CD14-positive monocyte (primary cell): ENCODE measurements at regions of chr4 and their contacts with region 1.

Region 1: DNA sequence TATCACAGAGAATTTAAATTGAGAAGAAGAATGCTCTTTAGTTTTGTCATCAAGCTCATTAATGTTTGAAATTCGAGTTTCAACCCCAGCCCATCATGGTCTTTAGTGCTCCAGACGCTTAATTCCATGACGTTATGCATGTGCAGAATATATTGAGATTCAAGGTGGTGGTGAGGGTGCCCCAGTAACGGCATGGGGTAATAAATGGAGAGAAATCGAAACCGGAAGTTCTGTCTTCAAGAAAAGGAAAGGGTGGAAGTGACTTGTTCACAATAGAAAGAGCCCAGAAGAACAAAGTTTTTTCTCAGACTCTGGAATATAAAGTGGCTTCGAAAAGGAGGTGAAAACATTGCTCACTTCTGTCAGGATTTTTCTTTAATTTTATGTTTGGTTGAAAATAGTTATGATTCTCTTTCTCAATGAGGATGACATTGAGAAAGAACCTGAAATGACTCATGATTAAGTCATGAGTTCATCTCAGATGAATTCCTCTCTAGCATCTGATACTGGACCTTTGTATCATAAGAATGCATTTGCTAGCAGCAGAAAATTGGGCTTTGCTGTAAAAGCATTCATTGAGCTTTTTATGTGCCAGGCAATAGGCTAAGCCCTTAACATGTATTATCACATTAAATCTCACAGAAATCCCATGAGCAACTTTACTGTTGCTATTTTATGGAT is 779 bp upstream of the DDX60L start:
- DNase-seq: peak; percentile 78 to 93 (median 89)
- H3K4me3 ChIP-seq: peak overlapping the region; percentile 81 to 93 (median 91)
- H3K4me3 Mint-ChIP-seq: peak overlapping the region; percentile 98 to 99
- H3K27ac ChIP-seq: peak overlapping the region; percentile 97 to 98
- H3K27ac Mint-ChIP-seq: peak overlapping the region; percentile 97 to 100 (median 100)
- H3K4me1 ChIP-seq: peaks cover 51 to 67% of the 10 kb centered on the region in 2 donors
- H3K4me1 Mint-ChIP-seq: peaks cover 67% of the 10 kb centered on the region
- H3K27me3 ChIP-seq: no peaks in the 10 kb centered on the region
- H3K27me3 Mint-ChIP-seq: no peaks in the 10 kb centered on the region
- CTCF ChIP-seq: no peak

Region 2: GRCh38 chr4:168451744-168452390 is 29.2 kb before region 1 on chr4:
- intact Hi-C with region 1: loop called (anchors 2 kb)
- DNase-seq: peak; percentile 82 to 93 (median 91)
- H3K4me3 ChIP-seq: no peak overlapping the region
- H3K4me3 Mint-ChIP-seq: peak overlapping the region; percentile 9 to 64
- H3K27ac ChIP-seq: peak overlapping the region; percentile 39 to 82
- H3K27ac Mint-ChIP-seq: peak overlapping the region; percentile 89 to 98 (median 96)
- H3K4me1 ChIP-seq: peaks cover 26 to 27% of the 10 kb centered on the region in 2 donors
- H3K4me1 Mint-ChIP-seq: peaks cover 31% of the 10 kb centered on the region
- H3K27me3 ChIP-seq: no peaks in the 10 kb centered on the region
- H3K27me3 Mint-ChIP-seq: no peaks in the 10 kb centered on the region
- CTCF ChIP-seq: no peak

Region 3: GRCh38 chr4:168503652-168504362 is 22.7 kb after region 1 on chr4:
- intact Hi-C with region 1: loop called (anchors 2 kb)
- DNase-seq: peak; percentile 91 to 97 (median 97)
- H3K4me3 ChIP-seq: peak overlapping the region in 1 of 3 experiments; percentile 45
- H3K4me3 Mint-ChIP-seq: peak overlapping the region; percentile 21 to 74
- H3K27ac ChIP-seq: peak overlapping the region; percentile 92 to 93
- H3K27ac Mint-ChIP-seq: peak overlapping the region in 2 of 7 donors; percentile 97 to 100
- H3K4me1 ChIP-seq: peaks cover 64 to 78% of the 10 kb centered on the region in 2 donors
- H3K4me1 Mint-ChIP-seq: peaks cover 21% of the 10 kb centered on the region
- H3K27me3 ChIP-seq: no peaks in the 10 kb centered on the region
- H3K27me3 Mint-ChIP-seq: peaks cover 0 to 2% (median 0%) of the 10 kb centered on the region in 3 donors
- CTCF ChIP-seq: no peak

Region 4: DNA sequence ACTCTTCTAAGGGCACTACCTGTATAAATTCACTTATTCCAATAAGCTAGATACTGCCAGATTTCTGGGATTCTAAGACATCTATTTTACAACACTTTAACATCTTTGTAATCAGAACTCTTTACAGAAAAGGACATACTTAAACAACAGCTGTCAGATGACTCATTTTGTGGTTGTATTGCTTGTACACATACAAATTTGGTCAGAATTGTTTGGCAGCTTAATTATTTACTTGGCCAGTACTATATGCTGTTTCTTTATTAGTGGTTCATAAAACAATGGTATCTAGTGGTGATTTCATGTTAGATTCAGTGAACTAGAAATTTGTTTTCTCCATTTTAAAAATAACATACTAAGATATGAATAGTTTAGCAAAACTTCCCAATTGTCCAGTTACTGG is 42.9 kb after region 1 on chr4:
- intact Hi-C with region 1: no loop called
- DNase-seq: peak in 1 of 3 donors; percentile 6
- H3K4me3 ChIP-seq: no peak overlapping the region
- H3K4me3 Mint-ChIP-seq: no peak overlapping the region
- H3K27ac ChIP-seq: no peak overlapping the region
- H3K27ac Mint-ChIP-seq: no peak overlapping the region
- H3K4me1 ChIP-seq: no peaks in the 10 kb centered on the region
- H3K4me1 Mint-ChIP-seq: no peaks in the 10 kb centered on the region
- H3K27me3 ChIP-seq: no peaks in the 10 kb centered on the region
- H3K27me3 Mint-ChIP-seq: no peaks in the 10 kb centered on the region
- CTCF ChIP-seq: no peak

Region 5: GRCh38 chr4:169010125-169011023 is 529.3 kb after region 1 on chr4 and contains the start of gene CBR4:
- intact Hi-C with region 1: loop called in 1 of 2 experiments (anchors 10 kb)
- DNase-seq: peak; percentile 98 to 99 (median 98)
- H3K4me3 ChIP-seq: peak within 1 kb of the TSS; percentile 66 to 82 (median 75)
- H3K4me3 Mint-ChIP-seq: peak within 1 kb of the TSS; percentile 92
- H3K27ac ChIP-seq: peak within 1 kb of the TSS; percentile 93 to 97
- H3K27ac Mint-ChIP-seq: peak within 1 kb of the TSS; percentile 93 to 99 (median 98)
- H3K4me1 ChIP-seq: peaks cover 16 to 19% of the 10 kb centered on the region in 2 donors
- H3K4me1 Mint-ChIP-seq: peaks cover 33% of the 10 kb centered on the region
- H3K27me3 ChIP-seq: no peaks in the 10 kb centered on the region
- H3K27me3 Mint-ChIP-seq: peaks cover 0 to 4% (median 0%) of the 10 kb centered on the region in 3 donors
- CTCF ChIP-seq: peak; percentile 47
- polyA plus RNA-seq, gene CBR4: 2.8 to 4.2 (median 4.1) TPM